ENCODE measurements at regions of chr17 and their contacts with region 1.

Region 1: GRCh38 chr17:75109407-75110233 is at the start of gene ARMC7:
- DNase-seq: peak; percentile 85 to 97
- ATAC-seq: peak; percentile 78 to 80
- H3K4me3 ChIP-seq: peak within 1 kb of the TSS; percentile 77
- H3K27ac ChIP-seq: peak within 1 kb of the TSS; percentile 91 to 94
- H3K4me1 ChIP-seq: peaks cover 22% of the 10 kb centered on the region
- CTCF ChIP-seq: peak; percentile 18; the same call in 1 of the 3 replicates
- EP300 ChIP-seq: no peak
- POLR2A ChIP-seq: peak; percentile 83
- RAD21 ChIP-seq: peak; percentile 32 to 46
- polyA plus RNA-seq, gene ARMC7: 8.5 and 9.5 TPM in 2 replicates

Region 2: DNA sequence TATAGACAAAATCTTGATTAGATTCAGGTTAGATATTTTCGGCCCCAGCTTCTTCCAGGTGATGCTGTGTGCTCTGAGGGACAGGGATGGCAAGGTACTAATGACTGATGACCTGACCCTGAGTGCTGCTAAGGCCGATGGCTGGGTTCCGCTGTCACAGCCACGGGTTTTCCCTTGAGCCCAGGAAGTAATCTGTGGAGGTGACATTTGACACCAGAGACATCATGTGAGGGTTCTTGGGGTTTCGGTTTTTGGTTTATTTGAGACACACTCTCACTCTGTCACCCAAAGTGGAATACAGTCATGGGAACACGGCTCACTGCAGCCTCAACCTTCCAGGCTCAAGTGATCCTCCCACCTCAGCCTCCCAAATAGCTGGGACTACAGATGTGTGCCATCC is 164.1 kb before region 1 on chr17:
- CTCF ChIA-PET with region 1: no interaction called
- POLR2A ChIA-PET with region 1: no interaction called
- DNase-seq: no peak
- ATAC-seq: no peak
- H3K4me3 ChIP-seq: no peak overlapping the region
- H3K27ac ChIP-seq: no peak overlapping the region
- H3K4me1 ChIP-seq: peaks cover 18% of the 10 kb centered on the region
- CTCF ChIP-seq: no peak
- EP300 ChIP-seq: no peak
- POLR2A ChIP-seq: no peak
- RAD21 ChIP-seq: no peak

Region 3: GRCh38 chr17:75024686-75025397 is 84.8 kb before region 1 on chr17:
- CTCF ChIA-PET with region 1: no interaction called
- POLR2A ChIA-PET with region 1: no interaction called
- DNase-seq: no peak
- ATAC-seq: peak in 1 of 2 experiments; percentile 67; a peak in 3 of 6 replicates
- H3K4me3 ChIP-seq: no peak overlapping the region
- H3K27ac ChIP-seq: no peak overlapping the region
- H3K4me1 ChIP-seq: no peaks in the 10 kb centered on the region
- CTCF ChIP-seq: no peak
- EP300 ChIP-seq: no peak
- POLR2A ChIP-seq: no peak
- RAD21 ChIP-seq: no peak

Region 4: GRCh38 chr17:75087558-75088453 is 21.8 kb before region 1 on chr17 and contains the start of gene SLC16A5:
- CTCF ChIA-PET with region 1: interaction called, 3,429 read pairs
- POLR2A ChIA-PET with region 1: interaction called, 35 read pairs
- DNase-seq: peak; percentile 95 to 99
- ATAC-seq: peak; percentile 75 to 82
- H3K4me3 ChIP-seq: peak within 1 kb of the TSS; percentile 67
- H3K27ac ChIP-seq: peak within 1 kb of the TSS; percentile 95 to 96
- H3K4me1 ChIP-seq: peaks cover 77% of the 10 kb centered on the region
- CTCF ChIP-seq: no peak
- EP300 ChIP-seq: no peak
- POLR2A ChIP-seq: peak; percentile 87
- RAD21 ChIP-seq: peak in 1 of 2 experiments; percentile 28; a peak in 1 of 5 replicates
- polyA plus RNA-seq, gene SLC16A5: 19.0 and 20.1 TPM in 2 replicates

Region 5: DNA sequence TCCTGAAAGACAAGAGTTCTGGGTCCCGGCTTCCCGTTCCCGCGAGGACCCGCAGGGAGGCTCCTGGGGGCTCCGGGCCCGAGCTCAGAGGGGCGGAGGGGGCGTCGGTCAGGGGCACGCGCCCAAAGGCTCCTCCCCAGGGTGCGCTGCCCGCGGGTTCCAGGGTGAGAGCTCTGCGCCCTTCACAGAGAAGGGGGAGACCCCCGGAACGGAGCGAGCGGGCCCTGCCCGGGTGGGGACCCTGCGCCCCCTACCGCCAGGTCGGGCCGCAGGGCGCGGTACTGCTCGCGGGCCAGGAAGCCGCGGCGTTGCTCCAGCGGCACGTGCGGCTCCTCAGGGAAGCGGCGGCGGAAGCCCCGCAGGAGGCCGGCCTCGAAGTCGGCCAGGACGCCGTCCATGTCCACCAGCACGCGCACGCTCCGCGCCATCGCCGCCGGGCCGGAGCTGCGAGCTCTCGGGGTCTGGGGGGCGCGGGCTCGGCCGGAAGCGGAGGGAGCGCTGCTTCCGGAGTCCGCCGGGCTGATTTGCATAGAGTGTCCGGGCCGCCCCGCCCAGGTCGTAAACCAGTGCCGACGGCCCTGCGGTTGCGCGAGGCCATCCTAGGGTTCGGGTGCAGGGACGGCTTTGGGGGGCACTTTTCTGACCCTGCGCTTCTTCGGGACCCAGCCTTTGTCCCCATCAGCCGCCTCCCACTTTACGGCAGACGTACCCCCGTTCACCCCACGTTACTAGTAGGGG is 21.8 kb after region 1 on chr17 and contains the start of gene NT5C:
- CTCF ChIA-PET with region 1: interaction called, 3,429 read pairs
- POLR2A ChIA-PET with region 1: interaction called, 70 read pairs
- DNase-seq: peak; percentile 85 to 91
- ATAC-seq: peak; percentile 83 to 86
- H3K4me3 ChIP-seq: peak within 1 kb of the TSS; percentile 89
- H3K27ac ChIP-seq: peak within 1 kb of the TSS; percentile 97
- H3K4me1 ChIP-seq: peaks cover 40% of the 10 kb centered on the region
- CTCF ChIP-seq: peak; percentile 95
- EP300 ChIP-seq: no peak
- POLR2A ChIP-seq: peak; percentile 72
- RAD21 ChIP-seq: peak; percentile 58 to 77
- polyA plus RNA-seq, gene NT5C: 54.5 and 73.7 TPM in 2 replicates

Region 6: GRCh38 chr17:75182569-75183450 is 73.2 kb after region 1 on chr17 and contains the start of gene SUMO2:
- CTCF ChIA-PET with region 1: interaction called, 48 read pairs
- POLR2A ChIA-PET with region 1: no interaction called
- DNase-seq: peak; percentile 98
- ATAC-seq: peak; percentile 87 to 92
- H3K4me3 ChIP-seq: peak within 1 kb of the TSS; percentile 96
- H3K27ac ChIP-seq: peak within 1 kb of the TSS; percentile 93 to 98
- H3K4me1 ChIP-seq: peaks cover 15% of the 10 kb centered on the region; the same call in 2 of the 3 replicates
- CTCF ChIP-seq: no peak
- EP300 ChIP-seq: no peak
- POLR2A ChIP-seq: peak; percentile 67
- RAD21 ChIP-seq: no peak
- polyA plus RNA-seq, gene SUMO2: 400 and 545 TPM in 2 replicates

Region 7: GRCh38 chr17:75205037-75205792 is 95.6 kb after region 1 on chr17 and contains the start of gene NUP85:
- CTCF ChIA-PET with region 1: interaction called, 543 read pairs
- POLR2A ChIA-PET with region 1: interaction called, 15 read pairs
- DNase-seq: peak; percentile 99 to 100
- ATAC-seq: peak; percentile 92 to 94
- H3K4me3 ChIP-seq: peak within 1 kb of the TSS; percentile 87
- H3K27ac ChIP-seq: peak within 1 kb of the TSS; percentile 94 to 96
- H3K4me1 ChIP-seq: peaks cover 19% of the 10 kb centered on the region; the same call in 2 of the 3 replicates
- CTCF ChIP-seq: no peak
- EP300 ChIP-seq: no peak; a peak in 1 of 5 replicates
- POLR2A ChIP-seq: peak; percentile 96
- RAD21 ChIP-seq: no peak
- polyA plus RNA-seq, gene NUP85: 110 and 124 TPM in 2 replicates

Region 8: GRCh38 chr17:75271233-75271954 is 161.8 kb after region 1 on chr17:
- CTCF ChIA-PET with region 1: interaction called, 19 read pairs
- POLR2A ChIA-PET with region 1: interaction called, 4 read pairs
- DNase-seq: peak; percentile 80 to 91
- ATAC-seq: peak; percentile 61 to 63
- H3K4me3 ChIP-seq: peak overlapping the region; percentile 93
- H3K27ac ChIP-seq: peak overlapping the region; percentile 95 to 96
- H3K4me1 ChIP-seq: peaks cover 26% of the 10 kb centered on the region
- CTCF ChIP-seq: peak; percentile 92
- EP300 ChIP-seq: no peak
- POLR2A ChIP-seq: peak; percentile 78
- RAD21 ChIP-seq: peak; percentile 16 to 49; a peak in 3 of 5 replicates

Measured in A549 (cell line).